Stomach (tissue), 19 donors: ENCODE measurements at regions of chr10 and their contacts with region 1.

Region 1: DNA sequence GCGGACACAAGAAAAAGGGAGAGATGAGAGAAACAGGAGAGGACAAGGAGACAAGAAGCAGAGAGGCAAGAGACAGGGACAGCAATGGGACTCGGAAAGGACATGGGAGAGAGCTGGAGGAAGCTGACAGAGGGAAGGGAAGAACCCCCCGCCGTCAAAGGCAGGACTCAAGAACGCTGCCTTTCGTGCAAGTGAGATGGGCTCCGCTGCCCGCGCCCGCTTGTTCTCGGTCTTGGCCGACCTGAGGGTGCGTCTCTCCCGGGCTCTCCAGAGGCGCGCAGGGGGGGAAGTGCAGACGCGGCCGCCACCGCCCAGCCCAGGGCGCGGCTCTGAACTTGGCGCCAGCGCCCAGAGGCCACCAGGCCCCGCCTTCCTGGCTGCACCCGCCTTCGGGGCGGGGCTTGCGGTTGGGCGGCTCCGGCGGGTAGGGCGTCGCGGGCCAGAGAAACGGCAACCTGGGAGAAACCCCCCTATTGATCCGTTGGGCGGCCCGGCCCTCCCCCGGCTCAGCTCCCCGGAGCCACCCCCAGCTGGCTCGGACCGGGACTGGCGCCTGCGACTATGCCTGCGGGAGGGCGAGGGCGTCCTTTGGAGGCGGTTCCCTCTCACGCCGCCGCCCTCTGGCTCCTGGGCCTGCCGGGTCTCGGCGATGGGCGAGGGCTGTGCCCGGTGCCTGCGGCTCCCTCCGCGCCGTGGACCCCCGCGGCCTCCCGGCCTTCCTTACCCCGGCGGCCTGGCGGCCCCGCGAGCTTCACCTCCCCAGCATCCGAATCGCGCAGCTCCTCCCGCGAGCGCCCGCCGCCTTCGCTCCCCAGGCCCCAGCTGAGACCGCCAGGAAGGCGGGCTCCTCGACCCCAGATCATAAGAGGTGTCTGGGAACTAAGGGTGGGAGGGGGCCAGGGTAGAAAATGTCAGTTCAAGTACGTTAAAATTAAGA is 2.2 kb upstream of the ANTXRL start:
- DNase-seq: peak; percentile 90 to 96
- H3K4me3 ChIP-seq: peak overlapping the region; percentile 62 to 71 (median 66)
- H3K27ac ChIP-seq: peak overlapping the region; percentile 73 to 87 (median 85)
- H3K4me1 ChIP-seq: peaks cover 9 to 35% (median 30%) of the 10 kb centered on the region in 4 donors
- H3K27me3 ChIP-seq: peaks cover 0 to 7% (median 0%) of the 10 kb centered on the region in 3 donors
- CTCF ChIP-seq: no peak
- EP300 ChIP-seq: no peak
- POLR2A ChIP-seq: no peak

Region 2: GRCh38 chr10:47384148-47384921 is 1099.8 kb after region 1 on chr10 and contains the start of gene ZNF488:
- intact Hi-C with region 1: loop called (anchors 5 kb)
- DNase-seq: peak; percentile 87 to 96
- H3K4me3 ChIP-seq: peak within 1 kb of the TSS; percentile 74 to 83 (median 77)
- H3K27ac ChIP-seq: peak within 1 kb of the TSS; percentile 67 to 87 (median 76)
- H3K4me1 ChIP-seq: peaks cover 22 to 34% (median 25%) of the 10 kb centered on the region in 4 donors
- H3K27me3 ChIP-seq: no peaks in the 10 kb centered on the region
- CTCF ChIP-seq: no peak
- EP300 ChIP-seq: no peak
- POLR2A ChIP-seq: no peak
- total RNA-seq, gene ZNF488: 0.43 to 15.1 (median 1.4) TPM in 4 of 5 donors, not detected in the other